ENCODE measurements at regions of chr17 and their contacts with region 1.

Region 1: GRCh38 chr17:48394821-48395220 is 35.2 kb downstream of the SKAP1 start:
- DNase-seq: peak in 2 of 4 donors; percentile 30 to 51
- ATAC-seq: no peak
- H3K4me3 ChIP-seq: no peak overlapping the region
- H3K27ac ChIP-seq: no peak overlapping the region
- H3K4me1 ChIP-seq: no peaks in the 10 kb centered on the region
- H3K27me3 ChIP-seq: peaks cover 5 to 74% of the 10 kb centered on the region in 2 donors
- CTCF ChIP-seq: no peak

Region 2: DNA sequence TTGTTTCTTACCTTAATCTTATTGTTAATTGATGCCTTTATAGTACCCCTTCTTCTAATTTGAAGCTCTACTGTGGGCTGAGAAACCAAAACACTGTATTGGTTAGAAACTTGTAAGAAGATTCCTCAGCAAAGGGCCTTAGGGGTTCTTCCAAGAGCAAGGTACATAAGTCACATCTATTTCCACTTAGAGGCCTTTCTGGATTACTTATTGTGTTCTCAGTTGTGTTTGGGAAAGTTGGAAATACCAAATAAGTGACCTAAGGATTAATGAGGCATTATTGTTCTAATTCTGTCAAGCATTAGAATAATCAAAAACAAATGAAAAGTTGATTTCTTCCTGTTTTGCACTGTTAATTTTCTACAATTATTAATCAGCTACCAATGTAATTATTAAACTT is 50.6 kb before region 1 on chr17:
- intact Hi-C with region 1: loop called in 1 of 2 experiments (anchors 5 kb)
- DNase-seq: no peak
- ATAC-seq: no peak
- H3K4me3 ChIP-seq: no peak overlapping the region
- H3K27ac ChIP-seq: no peak overlapping the region
- H3K4me1 ChIP-seq: no peaks in the 10 kb centered on the region
- H3K27me3 ChIP-seq: peaks cover 31 to 48% of the 10 kb centered on the region in 2 donors
- CTCF ChIP-seq: no peak